Cardiac septum (tissue), 1 donor: ENCODE measurements at regions of chr10 and their contacts with region 1.

Region 1: GRCh38 chr10:114304017-114304570 is 65.0 kb downstream of the VWA2 start:
- DNase-seq: peak; percentile 88

Region 2: GRCh38 chr10:114403541-114404161 is 99.6 kb after region 1 on chr10:
- intact Hi-C with region 1: loop called (anchors 10 kb)
- DNase-seq: no peak

Region 3: GRCh38 chr10:114437456-114438292 is 133.6 kb after region 1 on chr10:
- intact Hi-C with region 1: loop called (anchors 5 kb)
- DNase-seq: no peak

Region 4: GRCh38 chr10:114458955-114459354 is 154.9 kb after region 1 on chr10:
- intact Hi-C with region 1: loop called (anchors 5 kb)
- DNase-seq: no peak

Region 5: DNA sequence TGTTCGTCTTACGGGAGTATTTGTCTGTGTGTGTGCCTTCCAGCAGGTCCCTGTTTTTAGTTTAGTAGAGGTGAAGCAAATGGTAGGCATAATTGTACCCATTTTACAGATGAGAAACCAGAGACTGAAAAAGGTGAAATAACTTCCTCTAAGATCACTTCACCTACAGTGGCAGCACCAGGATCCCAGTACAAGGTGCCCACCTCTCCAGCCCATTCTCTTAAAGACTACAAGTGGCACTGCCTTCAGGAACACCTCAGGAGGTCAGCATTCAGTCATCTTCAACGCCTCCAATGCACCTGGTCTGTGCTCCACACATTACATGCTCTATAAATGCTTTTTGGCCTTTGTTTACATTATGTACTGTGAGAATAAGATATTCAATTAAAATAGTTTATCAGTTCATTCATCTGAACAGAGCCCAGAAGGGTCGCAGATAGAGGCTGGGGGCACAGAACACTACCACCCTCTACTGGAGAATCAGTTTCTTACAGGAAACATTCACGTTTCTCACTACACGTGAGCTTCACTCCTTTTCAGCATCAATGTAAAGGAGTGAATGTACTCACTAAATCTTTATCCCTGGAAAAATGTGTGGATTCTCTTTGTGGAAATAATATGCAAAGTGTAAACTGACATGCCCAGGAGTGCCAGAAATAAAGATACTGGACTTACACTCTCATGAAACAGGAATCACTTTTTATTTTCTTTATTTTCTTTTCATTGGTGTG is 399.4 kb after region 1 on chr10:
- intact Hi-C with region 1: loop called (anchors 10 kb)
- DNase-seq: no peak

Region 6: GRCh38 chr10:114791768-114792167 is 487.7 kb after region 1 on chr10:
- intact Hi-C with region 1: loop called (anchors 5 kb)
- DNase-seq: no peak